ENCODE measurements at regions of chr1 and their contacts with region 1.

Region 1: GRCh38 chr1:181479137-181479745 is 4.1 kb upstream of the CACNA1E start:
- ATAC-seq: peak; percentile 52 to 92 (median 71)
- H3K4me3 ChIP-seq: no peak overlapping the region
- H3K27ac ChIP-seq: no peak overlapping the region
- H3K4me1 ChIP-seq: peaks cover 0 to 4% of the 10 kb centered on the region in 2 donors

Region 2: DNA sequence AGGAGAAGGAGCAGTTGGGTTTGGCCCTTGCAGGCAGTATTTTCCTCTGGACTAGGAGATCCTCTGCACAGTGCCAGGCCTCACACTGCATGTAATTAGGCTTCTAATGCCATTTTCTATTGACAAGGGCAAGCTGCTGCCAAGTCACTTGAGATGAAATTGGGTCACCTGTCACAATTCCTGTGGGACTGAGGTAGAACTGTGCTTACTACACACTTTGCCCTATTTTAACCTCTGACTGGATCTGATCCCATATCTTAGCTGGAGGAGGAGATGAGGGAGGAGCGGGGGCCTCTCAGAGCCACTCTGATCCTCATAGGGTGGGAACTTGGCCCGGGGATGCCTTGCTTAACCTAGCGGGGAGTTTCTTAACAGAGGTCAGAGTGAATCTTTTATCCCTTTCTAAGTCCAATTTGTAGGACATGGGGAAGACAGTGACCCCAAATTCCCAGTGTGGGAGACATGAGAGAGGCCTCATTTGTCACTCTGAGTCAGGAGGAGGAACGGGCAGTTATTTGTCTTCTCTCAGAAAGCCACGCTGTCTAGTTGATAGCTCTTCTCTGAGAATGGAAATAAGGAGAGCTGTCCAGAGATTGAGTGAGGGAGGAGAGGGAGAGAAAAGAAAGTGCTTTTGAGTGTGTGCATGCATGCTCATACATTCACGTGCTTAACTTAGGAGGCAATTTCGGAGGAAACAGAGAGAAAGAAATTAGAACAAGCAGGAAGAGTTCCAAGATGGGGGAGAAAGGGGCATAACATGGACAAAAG is 125.4 kb after region 1 on chr1:
- in situ Hi-C with region 1: no loop called
- ATAC-seq: peak in 4 of 8 experiments; percentile 16 to 77 (median 67)
- H3K4me3 ChIP-seq: no peak overlapping the region
- H3K27ac ChIP-seq: peak overlapping the region in 1 of 2 donors; percentile 2
- H3K4me1 ChIP-seq: peaks cover 6 to 35% of the 10 kb centered on the region in 2 donors

Region 3: DNA sequence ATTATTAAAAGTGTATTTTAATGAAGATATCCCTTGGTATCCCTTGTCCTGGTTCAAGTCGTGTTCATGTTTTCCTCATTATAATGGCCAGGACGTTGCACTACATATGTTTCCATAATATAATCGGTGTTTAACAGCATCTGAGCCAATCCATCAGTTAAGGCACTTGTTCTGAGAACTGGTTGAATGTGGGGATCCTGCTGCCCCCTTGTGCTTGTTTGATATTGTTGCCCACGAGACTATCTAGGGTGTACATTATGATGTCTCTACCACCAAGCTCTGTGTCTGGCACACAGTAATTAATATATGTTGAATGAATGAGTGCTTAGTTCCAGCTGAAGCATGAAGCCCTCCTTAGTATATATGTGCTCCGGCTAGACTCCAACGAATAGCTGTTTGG is 197.0 kb after region 1 on chr1:
- in situ Hi-C with region 1: loop called in 1 of 9 experiments (anchors 25 kb)
- ATAC-seq: peak; percentile 63 to 86 (median 71)
- H3K4me3 ChIP-seq: no peak overlapping the region
- H3K27ac ChIP-seq: no peak overlapping the region
- H3K4me1 ChIP-seq: peaks cover 7 to 16% of the 10 kb centered on the region in 2 donors

Region 4: DNA sequence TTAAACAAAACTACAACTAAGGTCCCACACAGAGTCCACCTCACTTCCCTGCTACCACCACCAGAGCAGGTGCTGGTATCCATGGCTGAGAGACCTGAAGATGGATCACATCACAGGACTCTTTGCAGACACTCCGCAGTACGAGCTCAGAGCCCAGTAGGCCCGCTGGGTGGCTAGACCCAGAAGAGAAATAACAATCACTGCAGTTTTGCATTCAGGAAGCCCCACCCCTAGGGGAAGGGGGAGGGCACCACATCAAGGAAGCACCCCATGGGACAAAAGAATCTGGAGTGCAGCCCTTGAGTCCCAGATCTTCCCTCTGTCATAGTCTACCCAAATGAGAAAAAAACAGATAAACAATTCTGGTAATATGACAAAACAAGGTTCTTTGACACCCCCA is 525.4 kb after region 1 on chr1:
- in situ Hi-C with region 1: no loop called
- ATAC-seq: no peak
- H3K4me3 ChIP-seq: no peak overlapping the region
- H3K27ac ChIP-seq: no peak overlapping the region
- H3K4me1 ChIP-seq: no peaks in the 10 kb centered on the region

Region 5: GRCh38 chr1:182029379-182030331 is 550.4 kb after region 1 on chr1:
- in situ Hi-C with region 1: loop called in 3 of 9 experiments (anchors 25 kb)
- ATAC-seq: peak; percentile 90 to 95 (median 93)
- H3K4me3 ChIP-seq: peak overlapping the region; percentile 42 to 56 (median 48)
- H3K27ac ChIP-seq: peak overlapping the region; percentile 17 to 57
- H3K4me1 ChIP-seq: peaks cover 6 to 7% of the 10 kb centered on the region in 2 donors

Region 6: DNA sequence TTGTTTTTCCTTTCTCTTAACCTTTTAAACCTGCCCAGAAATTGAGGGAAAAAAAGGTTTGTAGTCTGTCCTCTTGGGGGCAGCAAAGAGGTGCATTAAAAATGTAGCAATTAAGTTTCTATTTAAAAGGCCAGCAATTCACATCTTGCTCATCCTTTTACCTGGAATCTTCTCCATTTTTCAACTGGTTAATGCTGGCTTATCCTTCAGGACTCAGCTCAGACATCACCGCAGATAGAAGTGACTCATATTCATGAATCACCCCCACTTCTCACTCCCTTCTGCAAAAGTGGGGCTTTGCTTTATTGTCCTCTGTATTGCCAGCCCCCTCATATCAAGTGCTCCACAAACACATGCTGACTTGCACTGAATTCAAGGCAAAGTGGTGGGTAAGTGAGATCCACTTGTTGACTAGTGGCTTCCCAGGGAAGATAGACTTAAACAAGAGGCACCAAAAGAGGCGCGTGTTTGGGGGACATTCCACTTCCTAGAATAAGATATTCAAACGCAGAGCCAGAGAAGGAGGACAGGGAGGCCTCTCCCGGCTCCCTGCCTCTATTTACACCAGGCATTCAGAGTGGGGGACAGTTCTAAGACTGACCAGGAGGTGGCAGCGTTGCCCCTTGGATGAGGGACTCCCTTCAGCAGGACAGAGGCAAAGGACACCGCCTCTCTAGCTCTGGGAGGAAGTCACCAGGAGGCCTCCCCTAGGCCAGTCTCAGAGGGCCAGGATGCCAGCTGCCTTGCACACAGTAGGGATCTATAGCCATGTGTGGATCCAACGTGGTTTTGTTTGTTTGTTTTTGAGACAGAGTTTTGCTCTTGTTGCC is 605.5 kb after region 1 on chr1:
- in situ Hi-C with region 1: loop called in 1 of 9 experiments (anchors 25 kb)
- ATAC-seq: peak; percentile 65 to 98 (median 96)
- H3K4me3 ChIP-seq: no peak overlapping the region
- H3K27ac ChIP-seq: peak overlapping the region in 1 of 2 donors; percentile 1
- H3K4me1 ChIP-seq: peaks cover 0 to 4% of the 10 kb centered on the region in 2 donors

Measured in motor neuron (in vitro differentiated cells).